Heart left ventricle (tissue), 16 donors: ENCODE measurements at regions of chr7 and their contacts with region 1.

Region 1: DNA sequence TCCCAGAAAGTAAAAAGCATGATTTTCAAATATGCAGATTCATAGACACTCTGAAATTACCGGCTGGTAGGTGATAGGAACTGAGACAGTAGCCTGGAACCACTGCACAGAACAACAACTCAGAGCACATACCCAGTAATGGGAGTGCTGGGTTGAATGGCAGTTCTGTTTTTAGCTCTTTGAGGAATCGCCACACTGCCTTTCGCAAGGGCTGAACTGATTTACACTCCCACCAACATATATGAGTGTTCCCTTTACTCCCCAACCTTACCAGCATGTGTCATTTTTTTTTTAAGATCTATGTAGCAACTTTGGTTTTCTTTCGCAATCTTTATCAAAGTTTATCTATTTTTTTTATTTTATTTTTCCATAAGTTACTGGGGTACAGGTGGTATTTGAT is 358.8 kb downstream of the CALN1 start:
- DNase-seq: no peak
- ATAC-seq: no peak
- H3K4me3 ChIP-seq: no peak overlapping the region
- H3K27ac ChIP-seq: no peak overlapping the region
- H3K4me1 ChIP-seq: no peaks in the 10 kb centered on the region
- H3K27me3 ChIP-seq: no peaks in the 10 kb centered on the region
- CTCF ChIP-seq: no peak
- POLR2A ChIP-seq: no peak

Region 2: GRCh38 chr7:72003236-72003635 is 50.1 kb before region 1 on chr7:
- intact Hi-C with region 1: no loop called
- DNase-seq: no peak
- ATAC-seq: no peak
- H3K4me3 ChIP-seq: no peak overlapping the region
- H3K27ac ChIP-seq: no peak overlapping the region
- H3K4me1 ChIP-seq: no peaks in the 10 kb centered on the region
- H3K27me3 ChIP-seq: no peaks in the 10 kb centered on the region
- CTCF ChIP-seq: no peak
- POLR2A ChIP-seq: no peak

Region 3: GRCh38 chr7:72032934-72033333 is 20.4 kb before region 1 on chr7:
- intact Hi-C with region 1: loop called in 1 of 10 experiments (anchors 2 kb)
- DNase-seq: peak in 4 of 5 donors; percentile 24 to 63 (median 35)
- ATAC-seq: peak; percentile 73 to 89 (median 82)
- H3K4me3 ChIP-seq: no peak overlapping the region
- H3K27ac ChIP-seq: peak overlapping the region in 7 of 12 donors; percentile 14 to 66 (median 43)
- H3K4me1 ChIP-seq: peaks cover 0 to 18% (median 0%) of the 10 kb centered on the region in 12 donors
- H3K27me3 ChIP-seq: no peaks in the 10 kb centered on the region
- CTCF ChIP-seq: no peak
- POLR2A ChIP-seq: no peak